ENCODE measurements at regions of chr6 and their contacts with region 1.

Region 1: DNA sequence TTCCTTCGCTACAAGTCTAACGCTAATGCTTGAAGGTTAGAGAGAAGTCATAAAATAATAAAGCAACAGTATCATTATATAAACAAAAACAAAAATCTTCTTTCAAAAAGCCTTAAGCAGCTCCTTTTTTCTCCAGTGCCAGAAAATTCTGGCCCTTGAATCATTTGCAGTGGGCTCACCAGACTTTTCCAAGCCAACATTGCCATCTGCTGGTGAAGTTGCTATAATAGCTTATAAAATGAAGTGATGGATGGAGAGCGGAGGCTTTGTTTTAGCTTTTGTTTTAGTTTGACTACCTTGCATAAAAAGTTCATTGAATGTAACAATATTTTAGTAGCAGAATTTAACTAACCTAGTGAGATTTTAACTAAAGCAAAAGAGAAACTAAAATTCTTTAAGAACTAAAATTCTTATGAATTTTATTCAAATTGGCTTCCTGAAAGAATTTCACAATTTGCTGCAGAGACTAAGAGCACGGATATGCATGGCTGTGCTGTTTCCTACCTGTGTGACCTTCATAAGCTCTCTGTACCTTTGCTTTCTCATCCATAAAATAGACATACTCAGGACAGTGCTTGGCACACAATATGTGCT is 44.8 kb upstream of the SLC2A12 start:
- DNase-seq: peak; percentile 63
- H3K4me3 Mint-ChIP-seq: no peak overlapping the region
- H3K27ac Mint-ChIP-seq: no peak overlapping the region
- H3K4me1 Mint-ChIP-seq: peaks cover 6% of the 10 kb centered on the region
- H3K27me3 Mint-ChIP-seq: peaks cover 12% of the 10 kb centered on the region

Region 2: DNA sequence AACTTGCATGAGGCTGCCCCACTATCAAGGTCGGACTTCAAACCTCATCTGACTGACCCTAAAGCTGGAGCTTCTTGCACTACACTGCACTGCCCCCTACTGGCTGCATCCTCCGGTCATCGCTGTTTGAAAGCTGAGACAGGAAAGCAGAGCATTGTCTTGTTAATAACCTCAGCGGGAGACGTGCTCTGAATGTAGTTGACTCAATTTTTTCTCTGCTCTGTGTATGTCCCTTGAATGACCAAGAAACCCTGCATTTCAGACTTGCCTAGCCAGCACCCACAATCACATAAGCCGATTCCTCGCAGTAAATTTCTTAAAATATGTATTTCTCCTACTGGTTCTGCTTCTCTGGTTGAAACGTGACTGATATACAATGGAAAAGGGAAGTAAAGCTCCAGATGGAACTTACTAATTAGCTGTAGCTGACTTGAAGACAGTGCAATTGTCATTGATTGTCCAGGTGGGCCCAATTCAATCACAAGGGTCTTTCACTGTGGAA is 180.5 kb before region 1 on chr6:
- CTCF ChIA-PET with region 1: interaction called, 303 read pairs
- POLR2A ChIA-PET with region 1: no interaction called
- DNase-seq: peak; percentile 76
- H3K4me3 Mint-ChIP-seq: no peak overlapping the region
- H3K27ac Mint-ChIP-seq: no peak overlapping the region
- H3K4me1 Mint-ChIP-seq: no peaks in the 10 kb centered on the region
- H3K27me3 Mint-ChIP-seq: peaks cover 28% of the 10 kb centered on the region

Region 3: DNA sequence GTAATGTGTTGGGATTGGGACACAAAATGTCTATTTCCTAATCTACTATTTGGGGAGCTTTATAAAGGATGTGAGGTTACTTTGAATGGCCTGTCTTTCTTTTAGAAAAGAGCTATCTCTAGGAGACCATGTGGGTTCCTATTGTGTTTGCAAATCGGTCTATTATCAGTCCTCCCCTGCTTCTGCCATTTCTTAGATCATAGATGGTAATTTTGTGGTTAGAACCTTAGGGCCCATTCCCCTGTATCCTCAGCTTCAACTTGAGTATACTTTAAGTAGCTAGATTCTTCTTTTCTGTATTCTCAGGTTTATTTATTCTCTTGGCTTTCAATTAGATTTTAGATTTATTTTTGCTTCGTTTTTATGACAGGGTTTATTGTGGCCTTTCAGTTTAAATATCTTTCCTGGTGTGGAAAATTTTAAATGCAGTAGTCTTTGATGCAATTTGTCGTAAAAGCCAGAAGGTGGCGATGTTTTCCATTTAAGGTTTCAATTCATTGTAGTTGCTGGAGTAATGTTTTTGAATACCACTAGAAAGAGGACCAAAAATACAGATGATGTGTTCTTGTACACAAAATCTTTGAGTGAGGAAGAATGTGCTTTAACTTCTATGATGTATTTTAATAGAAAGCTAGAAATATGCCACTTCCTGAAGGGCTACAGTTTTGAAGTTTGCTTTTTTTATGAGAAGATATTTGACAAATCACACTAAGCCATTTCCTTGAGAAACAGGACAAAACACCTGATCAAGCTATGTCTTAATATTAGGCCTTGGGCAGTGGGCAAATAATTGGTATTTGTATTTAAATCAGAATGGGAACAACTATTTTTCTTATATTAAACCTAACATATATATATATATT is 123.9 kb before region 1 on chr6:
- CTCF ChIA-PET with region 1: interaction called, 50 read pairs
- POLR2A ChIA-PET with region 1: no interaction called
- DNase-seq: no peak
- H3K4me3 Mint-ChIP-seq: no peak overlapping the region
- H3K27ac Mint-ChIP-seq: no peak overlapping the region
- H3K4me1 Mint-ChIP-seq: peaks cover 13% of the 10 kb centered on the region
- H3K27me3 Mint-ChIP-seq: no peaks in the 10 kb centered on the region

Region 4: GRCh38 chr6:134000442-134000841 is 96.8 kb before region 1 on chr6:
- CTCF ChIA-PET with region 1: no interaction called
- POLR2A ChIA-PET with region 1: no interaction called
- DNase-seq: no peak
- H3K4me3 Mint-ChIP-seq: no peak overlapping the region
- H3K27ac Mint-ChIP-seq: no peak overlapping the region
- H3K4me1 Mint-ChIP-seq: no peaks in the 10 kb centered on the region
- H3K27me3 Mint-ChIP-seq: peaks cover 25% of the 10 kb centered on the region

Region 5: GRCh38 chr6:134080171-134080795 is 16.9 kb before region 1 on chr6:
- CTCF ChIA-PET with region 1: interaction called, 15 read pairs
- POLR2A ChIA-PET with region 1: no interaction called
- DNase-seq: no peak
- H3K4me3 Mint-ChIP-seq: no peak overlapping the region
- H3K27ac Mint-ChIP-seq: no peak overlapping the region
- H3K4me1 Mint-ChIP-seq: peaks cover 26% of the 10 kb centered on the region
- H3K27me3 Mint-ChIP-seq: peaks cover 3% of the 10 kb centered on the region

Region 6: GRCh38 chr6:135801755-135802465 is 1704.7 kb after region 1 on chr6:
- CTCF ChIA-PET with region 1: no interaction called
- POLR2A ChIA-PET with region 1: no interaction called
- DNase-seq: no peak
- H3K4me3 Mint-ChIP-seq: no peak overlapping the region
- H3K27ac Mint-ChIP-seq: no peak overlapping the region
- H3K4me1 Mint-ChIP-seq: peaks cover 1% of the 10 kb centered on the region
- H3K27me3 Mint-ChIP-seq: no peaks in the 10 kb centered on the region

Measured in activated CD4-positive, alpha-beta memory T cell treated with anti-CD3 and anti-CD28 coated beads, Interleukin-2, amount 10 ng/mL, durations not matched to agents 7 days and 5 days (primary cell).